GM12878 (cell line): ENCODE measurements at regions of chr11 and their contacts with region 1.

Region 1: GRCh38 chr11:108559340-108559739 is 34.2 kb downstream of the EXPH5 start:
- DNase-seq: no peak
- ATAC-seq: peak; percentile 45
- H3K4me3 ChIP-seq: no peak overlapping the region
- H3K27ac ChIP-seq: no peak overlapping the region
- H3K4me1 ChIP-seq: peaks cover 11% of the 10 kb centered on the region
- H3K27me3 ChIP-seq: no peaks in the 10 kb centered on the region
- CTCF ChIP-seq: no peak
- EP300 ChIP-seq: no peak
- POLR2A ChIP-seq: no peak
- RAD21 ChIP-seq: no peak

Region 2: DNA sequence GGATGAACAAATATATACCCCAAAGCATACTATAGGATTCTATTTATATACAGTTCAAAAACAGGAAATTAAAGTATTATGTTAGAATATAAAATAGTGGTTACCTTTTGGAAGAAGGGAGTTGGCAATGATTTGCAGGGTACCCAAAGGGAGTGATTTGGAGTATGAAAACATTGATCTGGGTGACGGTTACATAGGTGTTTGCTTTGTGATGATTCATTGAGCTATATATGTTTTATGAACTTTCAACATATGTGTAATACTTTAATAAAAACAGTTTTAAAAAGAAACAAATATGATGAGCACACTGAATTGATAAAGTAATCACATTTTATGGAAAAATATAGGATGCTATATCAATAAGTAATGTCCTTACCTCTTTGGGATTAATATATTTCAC is 128.0 kb before region 1 on chr11:
- CTCF ChIA-PET with region 1: no interaction called
- POLR2A ChIA-PET with region 1: no interaction called
- RAD21 ChIA-PET with region 1: no interaction called
- SMC1A ChIA-PET with region 1: no interaction called
- in situ Hi-C with region 1: no loop called
- intact Hi-C with region 1: no loop called
- DNase-seq: no peak
- ATAC-seq: no peak
- H3K4me3 ChIP-seq: no peak overlapping the region
- H3K27ac ChIP-seq: no peak overlapping the region
- H3K4me1 ChIP-seq: no peaks in the 10 kb centered on the region; the same call in 1 of the 2 replicates
- H3K27me3 ChIP-seq: no peaks in the 10 kb centered on the region
- CTCF ChIP-seq: no peak
- EP300 ChIP-seq: no peak
- POLR2A ChIP-seq: no peak
- RAD21 ChIP-seq: no peak

Region 3: DNA sequence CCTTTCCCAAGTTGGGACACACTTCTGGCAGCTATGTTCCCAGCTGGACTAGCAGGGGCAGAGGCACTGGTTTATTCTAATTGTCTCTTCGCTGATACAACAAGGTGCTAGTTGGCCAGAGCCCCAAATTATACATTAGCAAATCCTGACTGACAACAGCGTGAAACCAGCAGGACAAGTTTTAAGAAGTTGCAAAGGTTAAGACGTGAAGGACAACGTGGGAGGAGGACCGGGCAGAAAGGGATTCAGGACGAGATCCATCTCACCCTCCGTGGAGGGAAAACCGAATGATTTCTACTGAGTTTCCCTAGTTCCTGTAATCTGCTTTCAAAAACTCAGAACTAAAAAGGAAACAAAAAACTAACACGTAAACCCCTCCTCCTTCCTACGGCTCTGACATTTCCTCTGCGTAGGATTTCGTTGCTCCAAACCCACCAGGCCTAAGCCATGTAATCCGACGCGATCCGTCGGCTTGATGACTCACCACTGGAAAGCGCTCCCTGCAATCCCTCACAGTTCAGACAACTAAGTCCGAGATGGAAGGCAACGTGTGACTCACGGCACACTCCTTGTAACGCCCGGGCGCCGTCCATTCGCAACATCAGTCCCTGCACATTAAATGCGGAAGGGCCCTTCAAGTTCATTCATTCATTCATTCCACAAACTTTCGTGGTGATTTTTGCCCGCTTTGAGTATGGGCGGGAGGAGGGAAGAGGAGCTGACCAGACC is 61.9 kb before region 1 on chr11:
- CTCF ChIA-PET with region 1: no interaction called
- POLR2A ChIA-PET with region 1: interaction called, 3 read pairs
- RAD21 ChIA-PET with region 1: interaction called, 12 read pairs
- SMC1A ChIA-PET with region 1: interaction called, 9 read pairs
- in situ Hi-C with region 1: no loop called
- intact Hi-C with region 1: no loop called
- DNase-seq: peak; percentile 60
- ATAC-seq: peak; percentile 68
- H3K4me3 ChIP-seq: peak overlapping the region; percentile 65
- H3K27ac ChIP-seq: peak overlapping the region; percentile 66
- H3K4me1 ChIP-seq: no peaks in the 10 kb centered on the region
- H3K27me3 ChIP-seq: no peaks in the 10 kb centered on the region
- CTCF ChIP-seq: no peak
- EP300 ChIP-seq: 0 out of 4 replicates have a peak, but pooled peaks of 1 of the 2 experiments have one; percentile 3
- POLR2A ChIP-seq: peak; percentile 83
- RAD21 ChIP-seq: no peak

Region 4: GRCh38 chr11:108593214-108593922 is 34.0 kb after region 1 on chr11 and contains the start of gene EXPH5:
- CTCF ChIA-PET with region 1: interaction called, 15 read pairs
- POLR2A ChIA-PET with region 1: interaction called, 23 read pairs
- RAD21 ChIA-PET with region 1: interaction called, 38 read pairs
- SMC1A ChIA-PET with region 1: interaction called, 26 read pairs
- in situ Hi-C with region 1: no loop called
- intact Hi-C with region 1: loop called (anchors 1 kb)
- DNase-seq: peak; percentile 82
- ATAC-seq: peak; percentile 95
- H3K4me3 ChIP-seq: peak within 1 kb of the TSS; percentile 96
- H3K27ac ChIP-seq: peak within 1 kb of the TSS; percentile 67
- H3K4me1 ChIP-seq: no peaks in the 10 kb centered on the region; the same call in 1 of the 2 replicates
- H3K27me3 ChIP-seq: no peaks in the 10 kb centered on the region
- CTCF ChIP-seq: 0 out of 6 replicates have a peak, but pooled peaks of 1 of the 3 experiments have one; percentile 3
- EP300 ChIP-seq: no peak
- POLR2A ChIP-seq: no peak
- RAD21 ChIP-seq: no peak; the same call in 1 of the 2 replicates
- polyA plus RNA-seq, gene EXPH5: 0.69 to 4.8 TPM

Region 5: DNA sequence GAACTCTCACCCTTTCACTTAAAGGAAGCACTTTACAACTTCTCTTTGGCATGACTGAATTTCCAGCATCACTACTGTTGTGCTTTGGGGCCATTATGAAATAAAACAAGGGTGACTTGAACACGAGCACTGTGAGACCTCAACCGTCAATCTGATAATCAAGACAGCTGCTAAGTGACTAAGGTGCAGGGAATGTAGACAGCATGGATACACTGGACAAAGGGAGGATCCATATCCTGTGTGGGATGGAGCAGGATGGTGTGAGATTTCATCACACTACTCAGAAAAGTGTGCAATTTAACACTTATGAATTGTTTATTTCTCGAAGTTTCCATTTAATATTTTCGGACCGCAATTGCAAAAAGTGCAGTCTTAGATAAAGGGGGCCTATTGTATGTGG is 50.3 kb after region 1 on chr11:
- CTCF ChIA-PET with region 1: interaction called, 6 read pairs
- POLR2A ChIA-PET with region 1: interaction called, 5 read pairs
- RAD21 ChIA-PET with region 1: interaction called, 12 read pairs
- SMC1A ChIA-PET with region 1: interaction called, 3 read pairs
- in situ Hi-C with region 1: no loop called
- intact Hi-C with region 1: no loop called
- DNase-seq: no peak
- ATAC-seq: no peak
- H3K4me3 ChIP-seq: no peak overlapping the region
- H3K27ac ChIP-seq: no peak overlapping the region
- H3K4me1 ChIP-seq: no peaks in the 10 kb centered on the region
- H3K27me3 ChIP-seq: no peaks in the 10 kb centered on the region
- CTCF ChIP-seq: no peak
- EP300 ChIP-seq: no peak
- POLR2A ChIP-seq: no peak
- RAD21 ChIP-seq: no peak

Region 6: DNA sequence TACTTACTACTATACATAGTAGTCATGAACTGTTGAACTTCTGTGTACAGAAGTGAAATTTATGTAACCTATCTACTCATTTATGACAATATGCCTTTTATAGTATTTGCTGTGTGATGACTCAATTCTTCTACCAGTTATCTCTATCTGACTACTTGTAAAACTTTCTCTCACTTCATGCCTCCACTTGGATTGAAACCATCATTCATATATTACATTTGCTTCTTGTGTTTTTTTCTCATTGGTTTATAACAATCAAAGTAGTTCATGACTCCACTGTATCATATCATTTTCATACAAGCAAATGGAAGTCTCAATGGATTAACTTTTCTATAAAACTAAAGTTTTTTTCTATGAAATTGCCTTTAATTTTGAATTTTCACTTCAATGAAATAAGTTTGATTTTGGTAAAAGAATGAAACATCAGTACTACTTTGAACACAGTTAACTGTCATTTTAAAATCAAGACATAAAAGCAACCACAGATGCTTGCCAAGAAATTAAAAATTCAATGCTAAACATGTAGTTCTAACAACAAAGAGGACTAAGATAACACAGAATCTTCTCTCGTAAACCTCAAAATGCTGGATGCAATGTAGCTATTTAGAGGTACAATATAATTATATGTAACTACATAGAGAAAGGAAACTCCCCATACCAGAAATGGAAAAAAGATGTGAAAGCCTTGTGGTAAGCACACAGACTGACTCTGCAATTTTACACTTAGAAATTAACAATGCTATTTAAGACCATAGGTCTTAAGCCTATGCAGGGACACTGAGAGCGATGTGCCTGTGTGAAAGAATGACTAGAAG is 61.8 kb after region 1 on chr11:
- CTCF ChIA-PET with region 1: interaction called, 12 read pairs
- POLR2A ChIA-PET with region 1: interaction called, 6 read pairs
- RAD21 ChIA-PET with region 1: interaction called, 46 read pairs
- SMC1A ChIA-PET with region 1: interaction called, 35 read pairs
- in situ Hi-C with region 1: no loop called
- intact Hi-C with region 1: loop called (anchors 1 kb)
- DNase-seq: peak; percentile 86
- ATAC-seq: peak; percentile 95
- H3K4me3 ChIP-seq: peak overlapping the region; percentile 39; the same call in 1 of the 2 replicates
- H3K27ac ChIP-seq: peak overlapping the region; percentile 93
- H3K4me1 ChIP-seq: peaks cover 18% of the 10 kb centered on the region
- H3K27me3 ChIP-seq: no peaks in the 10 kb centered on the region
- CTCF ChIP-seq: no peak
- EP300 ChIP-seq: peak; percentile 89 to 94
- POLR2A ChIP-seq: 0 out of 2 replicates have a peak, but pooled peaks have one; percentile 28
- RAD21 ChIP-seq: peak; percentile 16; the same call in 1 of the 2 replicates

Region 7: DNA sequence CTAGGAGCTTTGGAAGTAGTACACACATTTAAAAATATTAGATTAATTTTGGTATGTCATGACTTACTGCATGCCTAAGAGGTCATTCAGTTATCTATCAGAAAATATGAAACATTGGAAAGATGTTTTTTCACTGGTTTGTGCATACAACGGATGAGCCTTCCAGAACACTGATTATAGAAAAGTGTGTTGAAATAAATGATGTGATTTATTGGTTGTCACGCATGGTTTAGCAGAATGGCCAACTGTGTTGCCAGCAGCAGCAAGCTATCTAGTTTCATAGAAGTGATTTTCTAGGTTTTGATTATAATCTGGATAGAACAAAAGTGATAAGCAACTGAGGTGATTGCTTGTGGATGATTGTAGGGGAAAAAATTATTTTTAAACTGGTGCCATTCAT is 159.1 kb after region 1 on chr11:
- CTCF ChIA-PET with region 1: no interaction called
- POLR2A ChIA-PET with region 1: no interaction called
- RAD21 ChIA-PET with region 1: no interaction called
- SMC1A ChIA-PET with region 1: no interaction called
- in situ Hi-C with region 1: no loop called
- intact Hi-C with region 1: no loop called
- DNase-seq: no peak
- ATAC-seq: no peak
- H3K4me3 ChIP-seq: no peak overlapping the region
- H3K27ac ChIP-seq: no peak overlapping the region
- H3K4me1 ChIP-seq: peaks cover 4% of the 10 kb centered on the region; the same call in 1 of the 2 replicates
- H3K27me3 ChIP-seq: no peaks in the 10 kb centered on the region
- CTCF ChIP-seq: no peak
- EP300 ChIP-seq: no peak
- POLR2A ChIP-seq: no peak
- RAD21 ChIP-seq: no peak

Region 8: DNA sequence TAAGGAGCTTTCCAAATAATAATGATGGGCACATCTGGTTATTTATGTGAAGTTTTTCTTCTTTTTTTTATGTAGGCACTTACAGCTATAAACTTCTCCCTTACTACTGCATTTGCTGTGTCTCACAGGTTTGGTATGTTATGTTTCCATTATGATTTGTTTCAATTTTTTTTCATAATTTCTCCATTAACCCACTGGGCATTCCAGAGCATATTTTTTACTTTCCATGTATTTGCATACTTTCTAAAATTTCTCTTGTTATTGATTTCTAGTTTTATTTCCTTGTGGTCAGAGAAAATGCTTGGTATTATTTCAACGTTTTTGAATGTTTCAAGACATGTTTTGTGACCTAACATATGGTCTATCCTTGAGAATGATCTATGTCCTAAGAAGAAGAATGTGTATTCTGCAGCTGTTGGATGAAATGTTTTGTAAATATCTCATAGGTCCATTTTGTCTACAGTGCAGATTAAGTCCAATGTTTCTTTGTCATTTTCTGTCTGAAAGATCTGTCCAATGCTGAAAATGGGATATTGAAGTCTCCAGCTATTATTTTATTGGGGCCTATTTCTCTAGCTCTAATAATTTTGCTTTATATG is 467.6 kb after region 1 on chr11:
- CTCF ChIA-PET with region 1: no interaction called
- POLR2A ChIA-PET with region 1: no interaction called
- RAD21 ChIA-PET with region 1: no interaction called
- SMC1A ChIA-PET with region 1: no interaction called
- in situ Hi-C with region 1: no loop called
- intact Hi-C with region 1: no loop called
- DNase-seq: no peak
- ATAC-seq: no peak
- H3K4me3 ChIP-seq: no peak overlapping the region
- H3K27ac ChIP-seq: no peak overlapping the region
- H3K4me1 ChIP-seq: no peaks in the 10 kb centered on the region
- H3K27me3 ChIP-seq: no peaks in the 10 kb centered on the region
- CTCF ChIP-seq: no peak
- EP300 ChIP-seq: no peak
- POLR2A ChIP-seq: no peak
- RAD21 ChIP-seq: no peak